ENCODE measurements at regions of chr9 and their contacts with region 1.

Region 1: DNA sequence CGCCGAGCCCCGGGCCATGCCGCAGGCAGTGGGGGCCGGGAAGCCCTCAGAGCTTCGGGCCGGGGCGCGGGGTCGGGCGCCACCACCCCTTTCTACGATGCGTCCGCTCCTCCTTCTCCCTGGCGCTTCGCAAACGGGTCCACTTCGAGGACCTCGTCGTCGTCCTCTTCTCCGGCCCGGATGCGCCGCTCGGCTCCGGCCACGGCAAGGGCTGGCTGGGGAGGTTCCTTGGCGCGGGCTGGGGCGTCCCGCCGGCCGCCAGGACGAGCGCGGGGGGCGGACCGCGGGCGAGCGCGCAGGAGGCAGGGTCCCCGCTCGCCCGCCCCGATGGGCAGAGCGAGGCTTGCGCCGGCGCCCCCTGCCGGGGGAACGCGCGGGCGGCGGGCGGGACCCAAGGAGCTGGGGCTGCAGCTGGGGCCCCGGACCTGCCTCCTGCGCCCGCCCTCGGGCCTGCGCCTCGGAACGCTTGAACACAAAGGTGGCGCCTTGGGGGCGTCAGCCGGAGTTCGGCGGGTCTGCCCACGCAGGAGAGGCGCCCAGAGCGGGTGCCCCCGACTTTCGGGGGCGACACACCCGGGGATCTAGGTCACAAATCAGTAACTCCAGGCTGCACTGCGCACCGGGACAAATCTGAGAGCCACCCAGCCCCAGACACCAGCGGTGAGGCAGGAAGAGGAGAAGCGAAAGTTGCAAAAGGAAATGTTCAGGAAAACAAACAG is at the start of gene ROR2:
- DNase-seq: no peak
- H3K4me3 ChIP-seq: peak within 1 kb of the TSS; percentile 71
- H3K27ac ChIP-seq: no peak within 1 kb of the TSS
- H3K27me3 ChIP-seq: peaks cover 20% of the 10 kb centered on the region
- CTCF ChIP-seq: peak; percentile 41
- polyA plus RNA-seq, gene ROR2: 9.7 and 12.3 TPM in 2 replicates

Region 2: GRCh38 chr9:91758491-91758981 is 191.6 kb before region 1 on chr9:
- CTCF ChIA-PET with region 1: interaction called, 30 read pairs
- POLR2A ChIA-PET with region 1: no interaction called
- DNase-seq: no peak
- H3K4me3 ChIP-seq: no peak overlapping the region
- H3K27ac ChIP-seq: no peak overlapping the region
- H3K27me3 ChIP-seq: no peaks in the 10 kb centered on the region
- CTCF ChIP-seq: peak; percentile 80

Region 3: DNA sequence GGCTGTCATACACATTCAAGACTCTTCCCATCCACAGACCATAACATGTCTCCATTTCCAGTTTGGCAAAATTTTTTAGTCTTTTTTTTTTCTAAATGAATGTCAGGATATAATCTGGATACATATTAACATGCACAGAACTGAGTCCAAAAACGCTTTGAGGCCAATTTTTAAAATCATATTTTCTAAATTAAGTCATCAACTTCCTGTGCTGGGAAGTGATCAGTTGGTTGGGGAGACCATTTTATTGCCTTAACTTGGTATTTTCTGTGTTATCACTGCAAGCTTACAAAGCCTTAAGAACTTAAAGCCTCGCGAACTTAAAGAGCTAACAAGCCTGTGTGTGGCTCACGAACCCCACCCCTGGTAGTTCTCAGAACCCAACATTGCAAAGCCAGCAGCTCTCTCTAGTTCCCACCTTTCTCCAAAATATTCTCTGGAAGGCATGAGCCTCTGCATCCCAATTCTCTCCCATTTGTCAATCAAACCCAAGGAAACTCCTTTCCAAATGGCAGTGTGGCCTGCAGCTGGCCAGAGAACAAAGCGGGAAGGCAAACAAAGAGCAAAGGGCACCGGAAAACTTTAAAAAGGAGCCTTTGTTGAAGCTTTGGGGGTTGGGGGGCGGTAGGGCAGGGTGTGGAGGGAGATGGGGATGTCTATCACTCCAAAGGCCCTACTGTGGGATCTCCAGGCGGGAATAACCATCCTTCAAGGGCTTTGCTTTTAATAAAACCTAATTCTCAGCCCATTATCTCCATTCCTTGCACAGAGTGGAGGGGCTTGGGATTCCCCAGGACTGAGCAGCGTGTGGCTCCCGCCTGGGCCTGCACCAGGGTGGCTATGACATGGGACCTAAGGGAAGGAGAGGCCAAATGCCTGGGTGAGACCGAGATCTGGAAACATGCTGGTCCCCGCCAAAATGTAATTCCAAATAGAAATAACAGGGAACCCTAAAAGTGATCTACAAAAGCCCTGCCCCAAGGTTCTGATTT is 65.1 kb before region 1 on chr9:
- CTCF ChIA-PET with region 1: interaction called, 6 read pairs
- POLR2A ChIA-PET with region 1: interaction called, 10 read pairs
- DNase-seq: no peak
- H3K4me3 ChIP-seq: no peak overlapping the region
- H3K27ac ChIP-seq: no peak overlapping the region
- H3K27me3 ChIP-seq: no peaks in the 10 kb centered on the region
- CTCF ChIP-seq: no peak

Region 4: GRCh38 chr9:91966503-91966902 is 16.4 kb after region 1 on chr9:
- CTCF ChIA-PET with region 1: interaction called, 27 read pairs
- POLR2A ChIA-PET with region 1: no interaction called
- DNase-seq: no peak
- H3K4me3 ChIP-seq: no peak overlapping the region
- H3K27ac ChIP-seq: no peak overlapping the region
- H3K27me3 ChIP-seq: no peaks in the 10 kb centered on the region
- CTCF ChIP-seq: no peak

Region 5: DNA sequence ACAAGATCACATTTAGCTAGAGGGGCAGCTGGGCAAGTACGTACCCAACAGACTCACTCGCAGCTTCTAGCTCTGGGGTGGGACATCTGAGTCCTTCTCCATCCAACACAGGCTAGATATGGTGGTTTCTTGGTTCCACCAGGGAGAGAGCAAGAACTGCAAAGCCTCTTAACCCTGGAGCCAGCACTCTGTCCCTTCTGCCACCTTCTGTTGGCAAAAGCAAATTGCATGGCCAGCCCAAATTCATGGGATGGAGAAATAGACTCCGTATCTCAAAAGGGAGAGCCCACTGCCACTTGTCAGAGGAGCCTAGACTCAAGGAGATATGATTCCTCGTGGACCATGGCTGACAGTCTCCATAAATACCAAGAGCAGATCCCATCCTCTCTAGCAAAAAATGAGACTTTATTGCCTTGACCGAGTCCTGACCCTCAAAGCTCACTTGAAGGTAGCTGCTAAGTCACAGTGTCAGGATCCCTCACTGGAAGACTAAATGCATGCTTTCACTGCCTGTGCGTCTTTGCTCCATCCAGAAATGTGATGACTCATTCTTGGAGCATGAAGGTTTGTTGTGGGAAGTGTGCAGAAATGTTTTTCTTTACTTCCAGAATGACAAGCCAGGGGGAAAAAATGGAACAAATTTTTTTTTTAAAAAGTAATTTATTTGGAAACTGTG is 28.8 kb after region 1 on chr9:
- CTCF ChIA-PET with region 1: interaction called, 39 read pairs
- POLR2A ChIA-PET with region 1: no interaction called
- DNase-seq: peak; percentile 77
- H3K4me3 ChIP-seq: no peak overlapping the region
- H3K27ac ChIP-seq: peak overlapping the region; percentile 71
- H3K27me3 ChIP-seq: peaks cover 2% of the 10 kb centered on the region
- CTCF ChIP-seq: peak; percentile 40

Region 6: DNA sequence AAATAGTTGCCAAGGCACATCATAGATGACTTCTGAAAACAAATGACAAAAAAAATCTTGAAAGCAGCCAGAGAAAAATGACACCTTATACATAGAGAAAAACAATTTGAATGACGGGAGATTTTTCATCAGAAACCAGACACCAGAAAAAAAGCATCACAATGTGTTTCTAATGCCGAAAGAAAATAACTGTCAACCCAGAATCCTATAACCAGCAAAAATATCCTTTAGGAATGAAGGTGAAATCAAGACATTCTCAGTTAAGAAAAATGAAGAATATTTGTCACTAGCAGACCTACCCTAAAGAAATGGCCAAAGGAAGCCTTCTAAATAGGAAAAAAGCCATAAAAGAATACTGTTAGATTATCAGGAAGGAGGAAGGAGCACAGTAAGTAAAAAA is 111.1 kb after region 1 on chr9:
- CTCF ChIA-PET with region 1: interaction called, 10 read pairs
- POLR2A ChIA-PET with region 1: interaction called, 4 read pairs
- DNase-seq: no peak
- H3K4me3 ChIP-seq: no peak overlapping the region
- H3K27ac ChIP-seq: no peak overlapping the region
- H3K27me3 ChIP-seq: no peaks in the 10 kb centered on the region
- CTCF ChIP-seq: no peak

Region 7: GRCh38 chr9:92525306-92525705 is 575.2 kb after region 1 on chr9:
- CTCF ChIA-PET with region 1: no interaction called
- POLR2A ChIA-PET with region 1: no interaction called
- DNase-seq: no peak
- H3K4me3 ChIP-seq: no peak overlapping the region
- H3K27ac ChIP-seq: no peak overlapping the region
- H3K27me3 ChIP-seq: no peaks in the 10 kb centered on the region
- CTCF ChIP-seq: no peak